ENCODE measurements at regions of chr1 and their contacts with region 1.

Region 1: GRCh38 chr1:206905280-206906164 is 8.3 kb downstream of the IL24 start:
- DNase-seq: peak in 1 of 5 donors; percentile 63
- H3K4me3 ChIP-seq: no peak overlapping the region
- H3K4me3 Mint-ChIP-seq: peak overlapping the region; percentile 0 to 69 (median 51)
- H3K27ac ChIP-seq: no peak overlapping the region
- H3K27ac Mint-ChIP-seq: peak overlapping the region; percentile 42 to 91 (median 85)
- H3K4me1 ChIP-seq: peaks cover 70% of the 10 kb centered on the region
- H3K4me1 Mint-ChIP-seq: peaks cover 65 to 85% (median 76%) of the 10 kb centered on the region in 3 donors
- H3K27me3 ChIP-seq: no peaks in the 10 kb centered on the region
- H3K27me3 Mint-ChIP-seq: no peaks in the 10 kb centered on the region

Region 2: DNA sequence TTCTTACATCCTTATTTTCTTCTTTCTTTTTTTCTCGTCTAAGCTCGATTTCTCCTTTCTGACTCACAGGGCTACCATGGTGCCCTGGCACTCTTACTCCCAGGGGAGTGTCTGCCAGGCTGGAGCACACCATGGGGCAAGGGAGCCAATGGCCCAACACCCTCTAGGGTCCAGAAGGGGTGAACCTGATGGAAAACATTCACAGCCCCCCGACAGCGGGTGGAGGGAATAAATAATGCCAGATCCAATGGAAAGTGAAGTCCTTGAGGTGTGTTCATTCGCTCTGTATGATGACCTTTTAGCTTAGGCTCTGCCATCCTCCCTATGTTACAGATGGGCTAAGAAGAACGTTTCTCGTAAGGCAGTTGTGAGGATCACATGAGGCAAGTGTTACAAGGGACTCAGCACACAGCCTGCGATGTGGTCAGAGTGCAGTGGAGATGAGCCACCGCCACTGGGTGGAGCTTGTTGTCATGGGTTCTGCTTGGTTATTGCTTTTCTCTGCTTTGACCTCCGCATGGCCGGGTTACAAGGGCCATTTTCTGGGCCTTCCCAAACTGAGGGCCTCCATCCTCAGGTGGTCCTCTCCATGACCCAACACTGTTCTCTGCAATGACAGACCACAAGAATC is 19.7 kb after region 1 on chr1:
- CTCF ChIA-PET with region 1: interaction called, 17 read pairs
- POLR2A ChIA-PET with region 1: interaction called, 22 read pairs
- DNase-seq: peak; percentile 32 to 83 (median 63)
- H3K4me3 ChIP-seq: no peak overlapping the region
- H3K4me3 Mint-ChIP-seq: no peak overlapping the region
- H3K27ac ChIP-seq: peak overlapping the region; percentile 27
- H3K27ac Mint-ChIP-seq: no peak overlapping the region
- H3K4me1 ChIP-seq: peaks cover 51% of the 10 kb centered on the region
- H3K4me1 Mint-ChIP-seq: peaks cover 28 to 35% (median 29%) of the 10 kb centered on the region in 3 donors
- H3K27me3 ChIP-seq: no peaks in the 10 kb centered on the region
- H3K27me3 Mint-ChIP-seq: no peaks in the 10 kb centered on the region

Region 3: DNA sequence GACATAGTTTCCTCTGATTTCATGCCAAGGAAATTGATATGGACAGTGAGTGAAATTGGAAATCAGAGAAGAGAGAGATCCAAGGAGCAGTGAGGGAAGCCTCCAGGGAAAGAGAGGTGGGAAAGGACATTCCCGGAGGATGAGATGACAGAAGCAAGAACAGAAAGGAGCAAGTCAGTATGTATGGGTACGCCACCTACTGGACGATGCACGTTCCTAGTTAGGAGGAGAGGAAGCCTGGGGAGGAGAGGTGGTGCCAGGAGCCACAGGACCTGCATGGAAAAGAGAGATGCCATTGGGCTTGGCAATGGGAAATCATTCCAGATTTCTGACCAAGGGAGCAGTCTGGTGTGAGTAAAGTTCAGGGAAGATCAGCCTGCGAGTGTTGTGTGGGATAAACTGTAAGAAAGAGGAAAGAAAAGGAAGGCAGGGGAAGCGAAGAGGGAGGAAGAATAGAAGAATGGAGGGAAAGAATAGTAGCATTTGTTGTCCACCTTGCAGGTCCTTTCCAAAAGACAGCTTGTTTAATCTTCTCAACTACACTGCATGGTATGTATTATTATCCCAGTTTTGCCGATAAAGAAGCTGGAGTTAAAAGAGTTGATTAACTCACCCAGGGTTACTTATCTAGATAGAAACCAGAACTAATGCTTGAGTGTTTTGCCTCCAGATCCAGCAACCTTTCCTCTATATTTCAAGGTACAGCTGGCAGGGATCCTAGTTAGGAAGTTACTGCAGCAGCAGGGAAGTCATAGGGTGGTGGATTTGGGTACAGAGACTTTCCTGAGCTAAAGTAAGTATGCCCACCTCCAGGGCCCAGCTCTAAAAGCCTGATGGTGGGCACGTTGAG is 99.7 kb after region 1 on chr1:
- CTCF ChIA-PET with region 1: no interaction called
- POLR2A ChIA-PET with region 1: no interaction called
- DNase-seq: peak; percentile 3 to 50 (median 8)
- H3K4me3 ChIP-seq: no peak overlapping the region
- H3K4me3 Mint-ChIP-seq: peak overlapping the region in 2 of 7 donors; percentile 19 to 64
- H3K27ac ChIP-seq: no peak overlapping the region
- H3K27ac Mint-ChIP-seq: no peak overlapping the region
- H3K4me1 ChIP-seq: no peaks in the 10 kb centered on the region
- H3K4me1 Mint-ChIP-seq: peaks cover 0 to 6% (median 4%) of the 10 kb centered on the region in 3 donors
- H3K27me3 ChIP-seq: no peaks in the 10 kb centered on the region
- H3K27me3 Mint-ChIP-seq: peaks cover 14 to 27% of the 10 kb centered on the region in 2 donors